Ascending aorta (tissue), 2 donors: ENCODE measurements at regions of chr13 and their contacts with region 1.

Region 1: GRCh38 chr13:37058910-37059847 is at the start of gene SUPT20H:
- DNase-seq: peak; percentile 65 to 95
- H3K4me3 ChIP-seq: peak within 1 kb of the TSS; percentile 70 to 85
- H3K27ac ChIP-seq: peak within 1 kb of the TSS; percentile 89
- H3K4me1 ChIP-seq: peaks cover 7 to 9% of the 10 kb centered on the region in 2 donors
- H3K27me3 ChIP-seq: no peaks in the 10 kb centered on the region
- CTCF ChIP-seq: peak in 1 of 3 experiments; percentile 3
- total RNA-seq, gene SUPT20H: 9.9 TPM

Region 2: DNA sequence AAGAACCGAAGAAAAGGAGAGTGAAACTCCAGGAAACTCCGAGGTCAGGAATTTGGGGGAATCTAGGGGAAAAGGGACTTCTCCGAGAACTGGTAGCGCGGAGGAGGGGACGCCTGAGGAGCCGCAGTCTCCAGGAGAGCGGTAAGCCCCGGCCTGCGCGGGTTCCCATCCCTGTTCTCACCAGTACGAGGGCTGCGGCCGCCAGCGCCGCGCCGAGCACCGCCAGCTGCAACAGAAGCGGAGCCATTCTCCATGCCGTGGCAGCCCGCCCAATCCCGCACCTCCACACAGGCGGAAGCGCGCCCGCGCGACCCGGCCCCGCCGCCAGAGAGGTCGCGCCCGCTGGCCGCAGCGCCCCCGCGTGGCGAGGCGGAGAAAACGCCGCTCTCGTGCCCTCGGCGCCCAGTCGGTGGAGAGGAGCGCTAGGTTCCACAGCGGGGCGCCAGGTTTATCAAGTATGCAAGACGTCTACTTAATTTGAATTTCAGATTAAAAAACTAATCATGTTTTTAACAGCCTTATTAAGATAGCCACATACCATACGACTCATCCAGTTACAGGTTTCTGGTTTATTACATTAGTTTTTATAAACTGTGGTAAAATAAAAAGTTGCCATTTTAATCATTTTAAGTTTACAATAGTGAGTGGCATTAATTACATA is 60.0 kb before region 1 on chr13 and contains the start of gene ALG5:
- intact Hi-C with region 1: loop called (anchors 1 kb)
- DNase-seq: peak; percentile 23 to 93
- H3K4me3 ChIP-seq: peak within 1 kb of the TSS; percentile 88 to 98
- H3K27ac ChIP-seq: peak within 1 kb of the TSS; percentile 98 to 100
- H3K4me1 ChIP-seq: peaks cover 3 to 5% of the 10 kb centered on the region in 2 donors
- H3K27me3 ChIP-seq: no peaks in the 10 kb centered on the region
- CTCF ChIP-seq: peak; percentile 74 to 91 (median 87)
- total RNA-seq, gene ALG5: 26.7 TPM

Region 3: DNA sequence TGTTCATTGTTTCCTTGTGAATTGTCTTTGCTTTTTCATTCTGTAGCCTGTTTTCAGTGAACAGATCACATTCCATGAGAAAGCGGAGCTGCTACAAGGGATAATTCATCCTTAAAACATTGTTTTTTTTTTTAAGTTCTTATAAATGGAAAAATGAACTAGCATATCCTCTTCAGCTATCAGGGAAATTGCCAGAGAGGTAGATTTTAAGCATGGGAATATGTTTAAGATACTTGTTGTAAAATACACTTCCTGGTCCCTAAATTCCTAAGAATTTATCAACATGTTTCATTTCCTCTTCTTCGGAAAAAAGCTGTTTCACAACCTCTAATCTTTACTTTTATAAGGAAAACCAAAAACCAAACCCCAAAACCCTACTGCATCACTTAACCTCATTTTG is 301.4 kb after region 1 on chr13:
- intact Hi-C with region 1: no loop called
- DNase-seq: no peak
- H3K4me3 ChIP-seq: no peak overlapping the region
- H3K27ac ChIP-seq: no peak overlapping the region
- H3K4me1 ChIP-seq: no peaks in the 10 kb centered on the region
- H3K27me3 ChIP-seq: no peaks in the 10 kb centered on the region
- CTCF ChIP-seq: no peak